ENCODE measurements at regions of chr2 and their contacts with region 1.

Region 1: GRCh38 chr2:217827430-217828201 is 175.2 kb downstream of the TNS1 start:
- DNase-seq: peak in 1 of 2 experiments; percentile 5
- H3K4me3 ChIP-seq: no peak overlapping the region
- H3K27ac ChIP-seq: no peak overlapping the region
- H3K4me1 ChIP-seq: no peaks in the 10 kb centered on the region
- H3K27me3 ChIP-seq: peaks cover 9% of the 10 kb centered on the region; the same call in 1 of the 2 replicates
- CTCF ChIP-seq: no peak

Region 2: GRCh38 chr2:216044883-216045486 is 1782.6 kb before region 1 on chr2:
- CTCF ChIA-PET with region 1: no interaction called
- POLR2A ChIA-PET with region 1: interaction called, 21 read pairs
- intact Hi-C with region 1: no loop called
- DNase-seq: no peak
- H3K4me3 ChIP-seq: no peak overlapping the region
- H3K27ac ChIP-seq: no peak overlapping the region
- H3K4me1 ChIP-seq: no peaks in the 10 kb centered on the region
- H3K27me3 ChIP-seq: no peaks in the 10 kb centered on the region
- CTCF ChIP-seq: no peak

Measured in PC-9 (cell line).